ENCODE measurements at regions of chr21 and their contacts with region 1.

Region 1: DNA sequence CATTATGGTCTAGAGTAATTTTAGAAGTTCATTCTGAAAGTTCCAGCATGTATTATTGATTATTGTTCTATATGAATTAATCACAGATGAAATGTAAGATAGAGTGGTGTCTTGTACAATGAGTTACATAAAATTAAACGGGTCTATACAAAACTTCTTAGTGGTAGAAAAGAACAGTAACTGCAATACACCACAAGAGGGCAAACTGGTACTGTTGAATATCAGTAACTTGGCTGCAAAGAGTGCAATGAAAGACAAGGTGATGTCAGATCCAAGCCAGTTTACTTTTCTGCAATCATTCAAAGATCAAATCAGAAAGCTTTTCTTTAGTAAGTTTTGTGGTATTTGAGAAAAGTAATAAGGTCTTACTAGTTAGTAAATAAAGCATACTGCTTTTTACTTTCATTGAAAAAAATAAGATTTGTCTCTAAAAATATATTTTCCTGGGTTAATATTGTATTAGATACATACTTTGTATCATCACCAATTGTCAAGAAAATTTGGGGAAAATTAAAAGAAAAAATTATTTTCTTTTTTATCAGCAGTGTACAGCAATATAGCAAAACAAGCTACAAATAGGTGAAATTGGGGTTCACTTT is 66.4 kb upstream of the BTG3 start:
- DNase-seq: no peak
- H3K4me3 Mint-ChIP-seq: no peak overlapping the region
- H3K27ac Mint-ChIP-seq: no peak overlapping the region
- H3K4me1 Mint-ChIP-seq: no peaks in the 10 kb centered on the region
- H3K27me3 Mint-ChIP-seq: peaks cover 6% of the 10 kb centered on the region

Region 2: DNA sequence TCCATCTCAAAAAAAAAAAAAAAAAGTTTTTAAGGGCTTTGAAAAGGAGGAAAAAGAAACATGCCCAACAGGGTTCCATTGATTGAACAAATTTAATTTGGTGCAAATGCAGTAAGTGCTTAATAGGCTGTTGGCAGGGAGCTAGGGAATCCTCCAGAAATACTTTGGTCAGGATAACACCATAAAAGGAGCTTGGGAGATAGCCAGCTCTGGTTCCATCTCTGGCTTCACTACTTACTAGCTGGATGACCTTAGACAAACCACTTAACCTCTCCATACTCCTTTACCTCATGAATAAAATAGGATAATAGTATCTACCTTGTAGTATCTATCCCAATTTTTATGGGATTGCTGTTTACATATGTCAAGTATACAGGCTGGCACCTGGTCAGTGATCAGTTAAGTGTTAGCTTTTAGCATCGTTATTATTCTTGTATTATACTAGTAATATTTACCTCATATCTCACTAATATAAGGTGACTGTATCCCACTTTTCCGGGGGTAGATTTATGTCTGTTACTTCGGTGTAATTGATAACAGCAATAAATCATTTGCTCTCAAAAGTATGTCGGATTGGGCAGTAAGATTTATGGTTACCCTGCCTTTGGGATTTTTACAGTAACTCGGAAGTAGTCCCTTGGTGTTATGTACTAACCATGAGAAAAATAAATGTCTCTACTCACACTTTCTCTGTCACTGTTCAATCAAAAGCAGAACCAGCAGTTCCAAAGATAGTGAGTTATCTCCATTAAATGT is 102.8 kb before region 1 on chr21:
- intact Hi-C with region 1: no loop called
- DNase-seq: no peak
- H3K4me3 Mint-ChIP-seq: no peak overlapping the region
- H3K27ac Mint-ChIP-seq: no peak overlapping the region
- H3K4me1 Mint-ChIP-seq: no peaks in the 10 kb centered on the region
- H3K27me3 Mint-ChIP-seq: peaks cover 9% of the 10 kb centered on the region

Region 3: GRCh38 chr21:17819114-17819876 is 140.2 kb after region 1 on chr21 and contains the start of gene C21orf91:
- intact Hi-C with region 1: loop called (anchors 1 kb)
- DNase-seq: peak; percentile 86
- H3K4me3 Mint-ChIP-seq: peak within 1 kb of the TSS; percentile 94
- H3K27ac Mint-ChIP-seq: peak within 1 kb of the TSS; percentile 100
- H3K4me1 Mint-ChIP-seq: peaks cover 35% of the 10 kb centered on the region
- H3K27me3 Mint-ChIP-seq: no peaks in the 10 kb centered on the region
- total RNA-seq, gene C21orf91: 22.5 and 27.0 TPM in 2 replicates

Region 4: GRCh38 chr21:17903029-17903806 is 224.1 kb after region 1 on chr21:
- intact Hi-C with region 1: loop called (anchors 1 kb)
- DNase-seq: no peak
- H3K4me3 Mint-ChIP-seq: no peak overlapping the region
- H3K27ac Mint-ChIP-seq: no peak overlapping the region
- H3K4me1 Mint-ChIP-seq: peaks cover 6% of the 10 kb centered on the region
- H3K27me3 Mint-ChIP-seq: no peaks in the 10 kb centered on the region

Region 5: DNA sequence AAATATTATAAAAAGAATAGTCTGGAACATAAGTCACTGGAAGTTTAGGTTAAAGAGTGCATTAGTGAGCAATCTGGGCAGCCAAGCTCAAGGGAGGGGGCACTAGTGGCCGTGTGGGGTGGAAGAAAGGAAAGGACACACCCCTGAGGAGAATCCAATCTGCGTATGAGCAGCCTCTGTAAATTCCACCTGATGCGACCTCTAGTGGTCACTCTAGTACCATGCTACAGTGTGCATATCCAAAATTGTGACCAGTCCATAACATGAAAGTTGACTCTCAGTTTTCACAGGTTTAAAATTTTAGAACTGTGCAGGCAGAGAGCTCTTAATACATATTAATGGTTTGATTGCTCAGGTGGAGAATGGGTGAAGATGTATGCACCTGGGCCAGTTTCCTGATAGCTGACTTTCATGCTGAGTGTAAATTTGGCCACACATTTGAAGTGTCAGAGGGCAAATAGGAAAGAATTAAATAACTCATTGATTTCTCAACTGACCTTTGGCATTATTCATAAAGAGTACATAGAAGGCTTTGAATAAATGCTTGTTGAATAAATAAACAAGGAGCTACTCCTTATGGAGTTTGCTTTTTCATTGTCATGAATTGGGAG is 246.0 kb after region 1 on chr21:
- intact Hi-C with region 1: loop called (anchors 1 kb)
- DNase-seq: peak; percentile 29
- H3K4me3 Mint-ChIP-seq: no peak overlapping the region
- H3K27ac Mint-ChIP-seq: no peak overlapping the region
- H3K4me1 Mint-ChIP-seq: peaks cover 4% of the 10 kb centered on the region
- H3K27me3 Mint-ChIP-seq: peaks cover 3% of the 10 kb centered on the region